Body of pancreas (tissue), 4 donors: ENCODE measurements at regions of chr17 and their contacts with region 1.

Region 1: DNA sequence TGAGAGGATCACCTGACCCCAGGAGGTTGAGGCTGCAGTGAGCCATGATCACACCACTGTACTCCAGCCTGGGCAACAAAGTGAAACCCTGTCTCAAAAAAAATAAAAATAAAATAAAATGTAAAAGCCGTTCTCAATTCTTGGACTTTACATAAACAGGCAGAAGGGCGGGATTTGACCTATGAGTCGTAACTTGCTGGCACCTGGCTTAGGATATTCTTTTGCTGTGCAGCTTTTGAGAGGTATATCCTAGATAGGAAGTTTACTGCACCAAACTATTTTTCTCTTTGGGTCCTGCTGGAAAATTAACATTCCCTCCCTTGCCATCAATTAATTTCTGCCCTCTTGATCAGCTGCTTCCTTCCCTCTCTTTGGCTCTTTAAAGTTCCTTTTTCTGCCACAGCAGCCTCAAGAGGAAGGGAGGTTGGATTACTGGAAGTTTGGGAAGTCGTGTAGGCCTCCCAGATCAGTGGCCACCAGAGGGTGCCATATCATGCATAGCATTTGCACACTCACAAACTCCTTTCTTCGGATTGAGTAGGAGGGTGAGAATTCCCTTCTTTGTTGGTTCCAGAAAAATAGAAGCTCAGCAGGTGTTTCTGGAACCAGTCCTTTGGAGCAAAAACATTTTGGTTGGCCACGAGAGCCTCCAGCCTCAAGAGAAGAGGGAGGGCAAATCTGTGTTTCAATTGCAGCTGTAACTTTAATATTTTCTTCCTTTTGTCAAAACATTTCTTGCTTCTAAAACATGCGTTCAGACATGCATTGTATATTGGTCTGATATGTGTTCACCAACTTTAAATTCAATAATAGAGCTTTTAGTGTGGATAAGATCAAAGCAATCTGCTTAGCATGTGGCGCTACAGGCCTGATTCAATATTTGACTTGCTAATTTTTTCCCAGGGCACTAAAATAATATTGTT is 147.3 kb downstream of the CCDC182 start:
- DNase-seq: peak; percentile 68 to 81 (median 75)
- ATAC-seq: peak; percentile 81
- H3K4me3 ChIP-seq: no peak overlapping the region
- H3K27ac ChIP-seq: peak overlapping the region in 1 of 4 donors; percentile 0
- H3K4me1 ChIP-seq: peaks cover 10% of the 10 kb centered on the region
- H3K27me3 ChIP-seq: no peaks in the 10 kb centered on the region
- CTCF ChIP-seq: peak; percentile 71 to 82 (median 80)
- POLR2A ChIP-seq: no peak

Region 2: GRCh38 chr17:57401556-57402488 is 196.0 kb before region 1 on chr17:
- intact Hi-C with region 1: no loop called
- DNase-seq: no peak
- ATAC-seq: no peak
- H3K4me3 ChIP-seq: no peak overlapping the region
- H3K27ac ChIP-seq: no peak overlapping the region
- H3K4me1 ChIP-seq: peaks cover 2% of the 10 kb centered on the region
- H3K27me3 ChIP-seq: no peaks in the 10 kb centered on the region
- CTCF ChIP-seq: no peak
- POLR2A ChIP-seq: no peak

Region 3: DNA sequence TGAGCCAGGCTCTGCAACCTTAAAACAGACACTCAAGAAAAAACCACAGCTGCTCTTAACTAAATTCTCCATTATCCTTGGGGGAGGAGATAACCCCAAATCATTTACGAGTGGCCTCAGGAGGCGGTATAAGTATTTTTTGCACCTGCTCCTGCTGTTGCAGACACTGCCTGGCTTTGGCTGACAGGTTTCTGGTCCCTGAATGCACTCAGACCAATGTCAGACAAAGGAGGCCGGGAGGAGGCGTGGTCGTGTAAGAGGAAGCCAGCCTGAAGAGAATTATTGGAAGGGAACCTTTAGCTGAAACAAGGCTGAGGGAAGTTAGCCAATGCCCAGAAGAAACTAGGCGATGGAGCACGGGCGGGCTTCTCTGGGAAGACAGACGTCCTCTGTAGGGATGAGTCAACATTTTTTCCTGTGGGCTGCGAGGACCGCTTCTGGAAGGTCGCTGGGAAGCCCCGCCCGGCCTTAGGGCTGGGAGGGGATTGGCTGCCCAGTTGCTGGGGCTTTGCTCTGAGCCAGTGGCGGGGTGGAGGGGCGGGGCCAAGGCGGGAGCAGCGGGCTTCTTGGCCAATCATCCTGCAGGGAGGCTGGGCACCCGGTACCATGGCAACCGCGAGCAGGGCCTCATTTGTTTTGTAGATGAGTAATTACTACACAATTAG is 65.0 kb after region 1 on chr17:
- intact Hi-C with region 1: loop called (anchors 10 kb)
- DNase-seq: peak; percentile 89 to 95 (median 94)
- ATAC-seq: peak; percentile 95
- H3K4me3 ChIP-seq: no peak overlapping the region
- H3K27ac ChIP-seq: peak overlapping the region in 3 of 4 donors; percentile 17 to 73 (median 68)
- H3K4me1 ChIP-seq: peaks cover 15% of the 10 kb centered on the region
- H3K27me3 ChIP-seq: no peaks in the 10 kb centered on the region
- CTCF ChIP-seq: peak in 4 of 7 experiments; percentile 5 to 13 (median 10)
- POLR2A ChIP-seq: no peak